ENCODE measurements at regions of chr4 and their contacts with region 1.

Region 1: DNA sequence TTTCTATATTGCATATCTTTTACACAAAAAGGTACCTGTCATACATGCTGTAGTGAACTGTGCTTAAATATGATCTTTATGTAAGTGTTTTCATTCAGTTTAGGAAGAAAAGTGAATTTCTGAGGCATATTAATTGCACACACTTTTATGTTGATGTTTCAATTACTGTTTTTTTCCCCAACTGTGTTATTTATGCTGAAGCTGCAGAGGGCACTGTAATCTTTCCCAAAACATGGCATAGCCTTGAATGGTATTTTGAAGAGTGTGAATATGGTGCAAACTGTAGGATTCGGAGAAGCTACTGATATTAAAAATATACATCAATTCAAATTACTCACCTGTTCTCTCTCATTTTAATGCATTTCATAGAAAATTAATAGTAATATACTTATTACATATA is 6.0 kb upstream of the CENPE start:
- DNase-seq: peak; percentile 13
- ATAC-seq: no peak
- H3K4me3 ChIP-seq: no peak overlapping the region
- H3K27ac ChIP-seq: no peak overlapping the region
- H3K4me1 ChIP-seq: peaks cover 21% of the 10 kb centered on the region
- H3K27me3 ChIP-seq: no peaks in the 10 kb centered on the region; a peak in 1 of 5 replicates
- CTCF ChIP-seq: peak; percentile 63
- EP300 ChIP-seq: no peak
- POLR2A ChIP-seq: no peak
- RAD21 ChIP-seq: no peak

Region 2: GRCh38 chr4:103272174-103272573 is 68.1 kb after region 1 on chr4:
- CTCF ChIA-PET with region 1: no interaction called
- POLR2A ChIA-PET with region 1: no interaction called
- in situ Hi-C with region 1: no loop called
- intact Hi-C with region 1: no loop called
- DNase-seq: no peak
- ATAC-seq: no peak
- H3K4me3 ChIP-seq: no peak overlapping the region
- H3K27ac ChIP-seq: no peak overlapping the region
- H3K4me1 ChIP-seq: no peaks in the 10 kb centered on the region
- H3K27me3 ChIP-seq: no peaks in the 10 kb centered on the region
- CTCF ChIP-seq: no peak
- EP300 ChIP-seq: no peak
- POLR2A ChIP-seq: no peak
- RAD21 ChIP-seq: no peak

Region 3: DNA sequence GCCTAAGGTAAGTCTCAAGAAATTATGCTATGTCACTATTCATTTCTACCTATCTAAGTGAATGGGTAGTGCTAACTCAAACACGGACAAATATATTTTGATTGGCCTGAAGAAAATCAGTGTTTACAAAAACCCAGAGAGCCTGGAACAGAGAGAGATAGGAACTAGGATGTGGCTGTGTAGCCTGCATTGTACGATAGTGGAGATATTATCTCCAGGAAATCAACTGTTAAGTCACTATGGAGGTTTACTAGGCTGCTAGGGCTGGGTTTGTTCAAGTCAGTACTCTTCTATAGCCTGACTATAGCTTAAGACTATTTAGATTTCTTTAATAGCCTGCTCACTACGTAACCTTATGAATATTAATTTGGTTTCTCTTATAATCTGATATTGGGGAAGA is 387.7 kb after region 1 on chr4:
- CTCF ChIA-PET with region 1: no interaction called
- POLR2A ChIA-PET with region 1: no interaction called
- in situ Hi-C with region 1: no loop called
- intact Hi-C with region 1: loop called (anchors 10 kb)
- DNase-seq: no peak
- ATAC-seq: no peak
- H3K4me3 ChIP-seq: no peak overlapping the region
- H3K27ac ChIP-seq: no peak overlapping the region
- H3K4me1 ChIP-seq: no peaks in the 10 kb centered on the region
- H3K27me3 ChIP-seq: no peaks in the 10 kb centered on the region
- CTCF ChIP-seq: no peak
- EP300 ChIP-seq: no peak
- POLR2A ChIP-seq: no peak
- RAD21 ChIP-seq: no peak

Region 4: DNA sequence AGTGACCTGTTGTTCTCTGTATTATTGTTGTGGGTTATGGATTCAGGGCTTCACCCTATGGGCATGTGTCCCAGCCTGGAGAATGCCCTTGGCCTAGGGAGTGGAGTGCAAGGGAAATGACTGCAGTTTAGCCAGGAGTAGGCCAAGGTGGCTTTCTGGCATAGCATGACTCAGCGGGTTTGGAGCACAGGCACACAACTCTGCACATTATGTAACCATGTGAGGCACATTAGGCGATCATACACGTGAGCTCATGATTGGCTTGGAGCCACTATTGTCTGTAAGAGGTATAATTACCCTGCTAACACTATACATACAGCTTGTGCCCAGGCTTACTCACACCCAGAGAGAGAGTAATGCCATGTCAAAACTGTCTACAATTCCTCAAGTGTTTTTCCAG is 550.7 kb after region 1 on chr4:
- CTCF ChIA-PET with region 1: interaction called, 3 read pairs
- POLR2A ChIA-PET with region 1: no interaction called
- in situ Hi-C with region 1: no loop called
- intact Hi-C with region 1: loop called (anchors 1 kb)
- DNase-seq: peak; percentile 23
- ATAC-seq: no peak
- H3K4me3 ChIP-seq: no peak overlapping the region
- H3K27ac ChIP-seq: no peak overlapping the region
- H3K4me1 ChIP-seq: no peaks in the 10 kb centered on the region
- H3K27me3 ChIP-seq: no peaks in the 10 kb centered on the region; a peak in 1 of 5 replicates
- CTCF ChIP-seq: no peak
- EP300 ChIP-seq: no peak
- POLR2A ChIP-seq: no peak
- RAD21 ChIP-seq: no peak

Region 5: DNA sequence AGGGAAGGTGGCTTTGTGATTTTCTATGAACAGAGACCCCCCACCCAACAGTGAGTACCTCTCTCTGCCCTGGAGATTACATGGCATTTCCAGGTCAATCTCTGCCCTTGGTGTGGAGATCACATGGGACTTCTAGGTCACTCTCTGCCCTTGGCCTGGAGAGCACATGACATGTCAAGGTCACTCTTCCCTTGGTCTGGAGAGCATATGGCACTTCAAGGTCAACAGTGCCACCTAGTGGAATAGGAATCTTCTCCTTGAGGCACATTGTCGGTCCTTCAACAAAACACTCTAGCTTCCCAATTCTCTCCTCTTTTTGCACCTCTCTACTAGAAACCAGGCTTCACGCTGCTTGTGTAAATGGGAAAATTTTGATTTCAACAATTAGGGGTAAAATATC is 581.9 kb after region 1 on chr4:
- CTCF ChIA-PET with region 1: interaction called, 5 read pairs
- POLR2A ChIA-PET with region 1: no interaction called
- in situ Hi-C with region 1: loop called (anchors 10 kb)
- intact Hi-C with region 1: loop called (anchors 1 kb)
- DNase-seq: peak; percentile 64
- ATAC-seq: peak; percentile 92
- H3K4me3 ChIP-seq: no peak overlapping the region
- H3K27ac ChIP-seq: no peak overlapping the region
- H3K4me1 ChIP-seq: no peaks in the 10 kb centered on the region
- H3K27me3 ChIP-seq: no peaks in the 10 kb centered on the region; a peak in 1 of 5 replicates
- CTCF ChIP-seq: peak; percentile 69
- EP300 ChIP-seq: no peak
- POLR2A ChIP-seq: no peak
- RAD21 ChIP-seq: no peak; the same call in 1 of the 2 replicates

Region 6: GRCh38 chr4:103915224-103915869 is 711.2 kb after region 1 on chr4:
- CTCF ChIA-PET with region 1: interaction called, 6 read pairs
- POLR2A ChIA-PET with region 1: no interaction called
- in situ Hi-C with region 1: no loop called
- intact Hi-C with region 1: loop called (anchors 5 kb)
- DNase-seq: peak; percentile 15
- ATAC-seq: no peak
- H3K4me3 ChIP-seq: no peak overlapping the region
- H3K27ac ChIP-seq: no peak overlapping the region
- H3K4me1 ChIP-seq: no peaks in the 10 kb centered on the region
- H3K27me3 ChIP-seq: no peaks in the 10 kb centered on the region
- CTCF ChIP-seq: peak; percentile 52
- EP300 ChIP-seq: no peak
- POLR2A ChIP-seq: no peak
- RAD21 ChIP-seq: no peak

Region 7: GRCh38 chr4:103934178-103934789 is 730.2 kb after region 1 on chr4:
- CTCF ChIA-PET with region 1: no interaction called
- POLR2A ChIA-PET with region 1: no interaction called
- in situ Hi-C with region 1: loop called (anchors 10 kb)
- intact Hi-C with region 1: loop called (anchors 5 kb)
- DNase-seq: peak; percentile 41
- ATAC-seq: peak; percentile 65
- H3K4me3 ChIP-seq: no peak overlapping the region
- H3K27ac ChIP-seq: no peak overlapping the region
- H3K4me1 ChIP-seq: no peaks in the 10 kb centered on the region
- H3K27me3 ChIP-seq: no peaks in the 10 kb centered on the region
- CTCF ChIP-seq: peak; percentile 64
- EP300 ChIP-seq: no peak
- POLR2A ChIP-seq: no peak
- RAD21 ChIP-seq: no peak

Region 8: GRCh38 chr4:104344342-104344980 is 1140.3 kb after region 1 on chr4:
- CTCF ChIA-PET with region 1: no interaction called
- POLR2A ChIA-PET with region 1: no interaction called
- in situ Hi-C with region 1: no loop called
- intact Hi-C with region 1: no loop called
- DNase-seq: no peak
- ATAC-seq: no peak
- H3K4me3 ChIP-seq: no peak overlapping the region
- H3K27ac ChIP-seq: no peak overlapping the region
- H3K4me1 ChIP-seq: no peaks in the 10 kb centered on the region
- H3K27me3 ChIP-seq: no peaks in the 10 kb centered on the region
- CTCF ChIP-seq: no peak
- EP300 ChIP-seq: no peak
- POLR2A ChIP-seq: no peak
- RAD21 ChIP-seq: no peak